ENCODE measurements at regions of chr6 and their contacts with region 1.

Region 1: GRCh38 chr6:90537723-90538258 is 49.1 kb downstream of the MAP3K7 start:
- H3K4me3 Mint-ChIP-seq: peak overlapping the region; percentile 17
- H3K27ac Mint-ChIP-seq: peak overlapping the region; percentile 49
- H3K4me1 Mint-ChIP-seq: peaks cover 12% of the 10 kb centered on the region
- H3K27me3 Mint-ChIP-seq: no peaks in the 10 kb centered on the region

Region 2: GRCh38 chr6:90586836-90587638 is 49.2 kb after region 1 on chr6 and contains the start of gene MAP3K7:
- intact Hi-C with region 1: loop called (anchors 5 kb)
- H3K4me3 Mint-ChIP-seq: peak within 1 kb of the TSS; percentile 90
- H3K27ac Mint-ChIP-seq: peak within 1 kb of the TSS; percentile 98
- H3K4me1 Mint-ChIP-seq: peaks cover 22% of the 10 kb centered on the region
- H3K27me3 Mint-ChIP-seq: peaks cover 15% of the 10 kb centered on the region